Activated B cell treated with CpG ODN at 0.5 μM for 24 hours (primary cell): ENCODE measurements at regions of chr1 and their contacts with region 1.

Region 1: GRCh38 chr1:178870944-178871343 is at the start of gene ANGPTL1:
- DNase-seq: no peak
- ATAC-seq: no peak
- H3K4me3 Mint-ChIP-seq: no peak within 1 kb of the TSS
- H3K27ac Mint-ChIP-seq: peak within 1 kb of the TSS; percentile 77
- H3K4me1 Mint-ChIP-seq: peaks cover 39% of the 10 kb centered on the region
- H3K27me3 Mint-ChIP-seq: no peaks in the 10 kb centered on the region
- CTCF ChIP-seq: no peak
- total RNA-seq, gene ANGPTL1: not detected in 2 replicates

Region 2: DNA sequence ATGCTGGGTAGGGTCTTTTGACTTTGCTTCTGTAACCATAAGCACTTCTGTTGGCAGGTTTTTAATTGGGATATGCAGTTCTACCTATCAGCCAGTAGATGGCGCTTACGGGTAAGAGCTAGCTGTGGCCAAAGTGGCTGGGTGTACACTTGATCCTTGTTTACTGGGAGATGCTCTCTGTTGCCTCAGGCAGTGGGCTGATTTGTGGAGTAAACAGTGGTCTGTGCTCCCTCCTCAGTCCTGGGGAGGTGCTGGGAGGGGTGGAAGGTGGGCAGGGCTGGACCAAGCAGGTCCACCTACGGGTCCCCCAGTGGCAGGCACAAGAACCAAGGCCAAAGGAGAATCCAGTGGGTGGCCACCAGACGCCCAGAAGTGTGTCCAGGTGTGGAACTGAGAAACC is 102.5 kb before region 1 on chr1:
- CTCF ChIA-PET with region 1: interaction called, 4 read pairs
- POLR2A ChIA-PET with region 1: interaction called, 12 read pairs
- intact Hi-C with region 1: no loop called
- DNase-seq: no peak
- ATAC-seq: peak; percentile 58
- H3K4me3 Mint-ChIP-seq: peak overlapping the region; percentile 32
- H3K27ac Mint-ChIP-seq: peak overlapping the region; percentile 72
- H3K4me1 Mint-ChIP-seq: peaks cover 70% of the 10 kb centered on the region
- H3K27me3 Mint-ChIP-seq: no peaks in the 10 kb centered on the region
- CTCF ChIP-seq: peak; percentile 20

Region 3: GRCh38 chr1:178885869-178886268 is 14.9 kb after region 1 on chr1:
- CTCF ChIA-PET with region 1: interaction called, 3 read pairs
- POLR2A ChIA-PET with region 1: no interaction called
- intact Hi-C with region 1: loop called (anchors 2 kb)
- DNase-seq: no peak
- ATAC-seq: no peak
- H3K4me3 Mint-ChIP-seq: no peak overlapping the region
- H3K27ac Mint-ChIP-seq: peak overlapping the region; percentile 80
- H3K4me1 Mint-ChIP-seq: peaks cover 11% of the 10 kb centered on the region
- H3K27me3 Mint-ChIP-seq: no peaks in the 10 kb centered on the region
- CTCF ChIP-seq: no peak

Region 4: DNA sequence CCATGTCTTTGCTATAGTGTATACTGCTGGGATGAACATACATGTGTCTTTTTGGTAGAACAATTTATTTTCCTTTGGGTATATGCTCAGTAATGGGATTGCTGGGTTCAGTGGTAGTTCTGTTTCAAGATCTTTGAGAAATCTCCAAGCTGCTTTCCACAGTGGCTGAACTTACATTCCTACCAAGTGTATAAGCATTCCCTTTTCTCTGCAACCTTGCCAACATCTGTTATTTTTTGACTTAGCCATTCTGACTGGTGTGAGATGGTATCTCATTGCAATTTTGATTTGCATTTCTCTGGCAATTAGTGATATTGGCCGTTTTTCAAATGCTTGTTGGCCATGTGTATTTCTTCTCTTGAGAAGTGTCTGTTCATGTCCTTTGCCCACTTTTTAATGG is 37.4 kb after region 1 on chr1:
- CTCF ChIA-PET with region 1: no interaction called
- POLR2A ChIA-PET with region 1: no interaction called
- intact Hi-C with region 1: loop called (anchors 5 kb)
- DNase-seq: no peak
- ATAC-seq: no peak
- H3K4me3 Mint-ChIP-seq: no peak overlapping the region
- H3K27ac Mint-ChIP-seq: peak overlapping the region; percentile 46
- H3K4me1 Mint-ChIP-seq: peaks cover 42% of the 10 kb centered on the region
- H3K27me3 Mint-ChIP-seq: no peaks in the 10 kb centered on the region
- CTCF ChIP-seq: no peak